ENCODE measurements at regions of chr19 and their contacts with region 1.

Region 1: DNA sequence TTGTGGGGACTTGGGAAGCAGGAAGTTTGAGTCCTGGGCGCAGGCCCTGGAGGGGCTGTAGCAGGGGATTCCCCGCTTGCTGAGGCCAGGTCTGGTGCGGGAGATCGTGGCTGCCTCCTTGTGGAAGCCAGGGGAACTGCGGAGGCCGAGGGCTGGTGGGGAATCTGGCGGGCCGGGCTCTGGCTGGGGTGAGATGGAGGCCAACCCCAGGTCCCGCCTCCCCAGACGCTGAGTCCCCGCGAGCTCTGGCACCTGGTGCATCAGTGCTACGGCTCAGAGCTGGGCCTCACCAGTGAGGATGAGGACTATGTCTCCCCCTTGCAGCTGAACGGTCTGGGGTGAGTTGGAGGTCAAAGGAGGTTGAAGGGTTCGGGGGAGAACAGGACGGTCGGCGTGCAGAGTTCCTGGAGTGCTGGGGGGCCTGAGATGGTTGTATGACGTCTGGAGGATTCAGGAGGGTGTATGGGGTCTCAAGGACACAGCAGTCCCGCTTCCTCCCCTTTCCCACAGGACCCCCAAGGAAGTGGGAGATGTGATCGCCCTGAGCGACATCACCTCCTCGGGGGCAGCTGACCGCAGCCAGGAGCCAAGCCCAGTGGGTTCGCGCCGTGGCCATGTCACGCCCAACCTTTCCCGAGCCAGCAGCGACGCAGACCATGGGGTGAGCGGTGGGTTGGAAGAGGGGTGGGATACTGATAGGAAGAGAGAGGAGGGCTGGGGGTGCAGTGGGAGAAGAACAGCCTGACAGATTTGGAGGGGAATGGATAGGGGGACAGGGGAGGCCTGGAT is 13.1 kb downstream of the GRAMD1A start:
- DNase-seq: peak; percentile 94
- H3K4me3 ChIP-seq: peak overlapping the region in 1 of 2 experiments; percentile 49; a peak in 1 of 4 replicates
- H3K27ac ChIP-seq: peak overlapping the region in 1 of 2 experiments; percentile 37; a peak in 1 of 4 replicates
- H3K4me1 ChIP-seq: peaks cover 0 to 5% of the 10 kb centered on the region in 2 experiments; a peak in 1 of 4 replicates
- H3K27me3 ChIP-seq: no peaks in the 10 kb centered on the region
- CTCF ChIP-seq: peak; percentile 86
- EP300 ChIP-seq: no peak
- RAD21 ChIP-seq: peak; percentile 78

Region 2: GRCh38 chr19:34838753-34839431 is 174.3 kb before region 1 on chr19:
- CTCF ChIA-PET with region 1: interaction called, 12 read pairs
- POLR2A ChIA-PET with region 1: no interaction called
- DNase-seq: no peak
- H3K4me3 ChIP-seq: no peak overlapping the region; a peak in 1 of 4 replicates
- H3K27ac ChIP-seq: peak overlapping the region in 1 of 2 experiments; percentile 98; a peak in 2 of 4 replicates
- H3K4me1 ChIP-seq: peaks cover 0 to 35% of the 10 kb centered on the region in 2 experiments; a peak in 2 of 4 replicates
- H3K27me3 ChIP-seq: no peaks in the 10 kb centered on the region
- CTCF ChIP-seq: no peak
- EP300 ChIP-seq: no peak
- RAD21 ChIP-seq: no peak

Region 3: GRCh38 chr19:34999498-35000341 is 13.5 kb before region 1 on chr19 and contains the start of gene GRAMD1A:
- CTCF ChIA-PET with region 1: interaction called, 16 read pairs
- POLR2A ChIA-PET with region 1: interaction called, 8 read pairs
- DNase-seq: peak; percentile 98
- H3K4me3 ChIP-seq: peak within 1 kb of the TSS; percentile 68 to 79
- H3K27ac ChIP-seq: peak within 1 kb of the TSS; percentile 86 to 91
- H3K4me1 ChIP-seq: peaks cover 7 to 16% of the 10 kb centered on the region in 2 experiments; a peak in 2 of 4 replicates
- H3K27me3 ChIP-seq: no peaks in the 10 kb centered on the region
- CTCF ChIP-seq: no peak
- EP300 ChIP-seq: no peak
- RAD21 ChIP-seq: no peak
- polyA plus RNA-seq, gene GRAMD1A: 64.6 and 81.9 TPM in 2 replicates

Region 4: DNA sequence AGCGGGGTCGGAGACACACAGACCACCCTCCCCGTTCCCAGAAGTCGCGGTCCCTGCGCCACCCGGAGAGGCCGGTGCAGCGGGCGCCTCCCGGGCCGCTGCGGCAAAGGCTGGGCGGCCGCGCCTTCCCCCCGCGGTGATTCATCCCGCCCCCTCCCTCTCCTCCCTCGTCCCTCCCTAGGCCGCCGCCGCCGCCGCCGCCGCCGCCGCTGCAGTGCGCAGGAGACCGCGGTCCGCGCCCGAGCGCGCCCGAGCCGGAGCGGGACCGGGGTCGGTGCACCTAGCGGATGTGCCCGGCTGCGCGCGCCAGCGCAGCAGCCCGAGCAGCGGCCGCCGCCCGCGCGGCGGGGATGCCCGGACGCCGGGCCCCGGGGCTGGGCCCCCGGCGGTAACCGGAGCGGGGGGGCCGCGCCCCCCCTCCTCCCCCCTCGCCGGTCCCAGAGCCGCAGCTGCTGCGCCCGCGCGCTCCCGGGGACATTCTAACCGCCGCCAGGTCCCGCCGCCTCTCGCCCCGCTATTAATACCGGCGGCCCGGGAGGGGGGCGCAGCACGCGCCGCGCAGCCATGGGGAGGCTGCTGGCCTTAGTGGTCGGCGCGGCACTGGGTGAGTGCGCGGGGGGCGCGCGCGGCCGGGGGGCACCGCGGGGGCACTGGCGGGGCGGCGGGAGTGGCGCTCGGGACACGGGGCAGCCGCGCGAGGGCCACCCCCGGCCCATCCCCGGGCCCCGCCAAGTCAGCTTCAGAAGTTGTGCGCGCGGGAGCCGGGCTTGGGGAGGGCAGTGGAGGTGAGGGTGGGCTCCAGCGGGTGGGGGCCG is 17.2 kb after region 1 on chr19 and contains the start of gene SCN1B:
- CTCF ChIA-PET with region 1: interaction called, 15 read pairs
- POLR2A ChIA-PET with region 1: no interaction called
- DNase-seq: peak; percentile 91
- H3K4me3 ChIP-seq: peak within 1 kb of the TSS; percentile 41 to 53
- H3K27ac ChIP-seq: no peak within 1 kb of the TSS
- H3K4me1 ChIP-seq: peaks cover 0 to 21% of the 10 kb centered on the region in 2 experiments; a peak in 1 of 4 replicates
- H3K27me3 ChIP-seq: no peaks in the 10 kb centered on the region
- CTCF ChIP-seq: no peak
- EP300 ChIP-seq: peak in 1 of 2 experiments; percentile 39; a peak in 1 of 4 replicates
- RAD21 ChIP-seq: no peak
- polyA plus RNA-seq, gene SCN1B: 10.3 and 10.5 TPM in 2 replicates

Region 5: GRCh38 chr19:35066691-35067563 is 53.7 kb after region 1 on chr19:
- CTCF ChIA-PET with region 1: no interaction called
- POLR2A ChIA-PET with region 1: no interaction called
- DNase-seq: peak; percentile 90
- H3K4me3 ChIP-seq: no peak overlapping the region; a peak in 1 of 4 replicates
- H3K27ac ChIP-seq: no peak overlapping the region
- H3K4me1 ChIP-seq: no peaks in the 10 kb centered on the region; a peak in 1 of 4 replicates
- H3K27me3 ChIP-seq: 0 out of 2 replicates have a peak, but pooled peaks cover 3% of the 10 kb centered on the region
- CTCF ChIP-seq: peak; percentile 94
- EP300 ChIP-seq: no peak
- RAD21 ChIP-seq: peak; percentile 94